ENCODE measurements at regions of chr17 and their contacts with region 1.

Region 1: DNA sequence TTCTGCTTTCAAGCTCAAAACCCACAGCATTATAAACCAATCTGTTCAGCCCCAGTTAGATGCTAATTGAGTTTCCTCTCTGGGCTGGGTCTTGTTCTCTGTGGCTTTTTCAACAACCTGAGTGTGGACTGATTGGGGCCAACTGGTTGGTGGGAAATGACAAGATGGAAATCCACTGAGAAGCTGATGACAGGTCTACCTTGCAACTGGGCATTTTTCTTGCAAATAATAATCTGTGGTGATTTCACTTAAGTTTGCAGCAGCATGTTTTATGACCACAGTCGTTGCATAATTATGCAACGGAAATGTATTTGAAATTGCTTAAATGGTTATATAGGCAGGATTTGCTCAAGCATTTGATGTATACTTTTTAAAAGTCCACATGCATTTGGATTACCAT is 69.9 kb downstream of the AKAP1 start:
- DNase-seq: no peak
- H3K4me3 ChIP-seq: no peak overlapping the region
- H3K27ac ChIP-seq: no peak overlapping the region
- H3K4me1 ChIP-seq: peaks cover 2% of the 10 kb centered on the region
- H3K27me3 ChIP-seq: no peaks in the 10 kb centered on the region
- CTCF ChIP-seq: no peak

Region 2: DNA sequence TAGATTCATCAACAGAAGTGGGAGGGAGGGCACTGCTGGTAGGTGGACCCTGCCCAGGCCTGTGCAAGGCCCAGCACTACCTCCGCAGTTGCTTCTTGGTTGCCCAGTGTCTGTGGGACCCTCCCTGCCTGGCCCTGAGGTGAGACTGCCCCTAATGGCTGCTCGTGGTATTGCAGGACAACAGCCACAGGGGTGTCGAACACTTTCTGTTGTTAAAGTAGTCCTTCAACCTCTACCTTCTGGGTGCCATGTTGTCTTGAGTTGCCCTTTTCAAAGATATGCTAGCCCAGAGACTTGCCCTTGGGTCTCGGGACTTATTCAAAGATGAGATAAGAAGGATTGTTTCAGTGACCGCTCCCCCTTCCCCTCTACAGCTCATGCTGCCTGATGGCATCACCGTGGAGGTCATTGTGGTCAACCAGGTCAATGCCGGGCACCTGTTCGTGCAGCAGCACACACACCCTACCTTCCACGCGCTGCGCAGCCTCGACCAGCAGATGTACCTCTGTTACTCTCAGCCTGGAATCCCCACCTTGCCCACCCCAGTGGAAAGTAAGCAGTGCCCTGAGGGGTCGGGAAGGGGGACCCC is 40.7 kb before region 1 on chr17:
- CTCF ChIA-PET with region 1: no interaction called
- dilution Hi-C with region 1: no loop called
- in situ Hi-C with region 1: no loop called
- intact Hi-C with region 1: no loop called
- DNase-seq: no peak
- H3K4me3 ChIP-seq: no peak overlapping the region
- H3K27ac ChIP-seq: no peak overlapping the region
- H3K4me1 ChIP-seq: peaks cover 15% of the 10 kb centered on the region
- H3K27me3 ChIP-seq: no peaks in the 10 kb centered on the region
- CTCF ChIP-seq: peak; percentile 76 to 90

Region 3: DNA sequence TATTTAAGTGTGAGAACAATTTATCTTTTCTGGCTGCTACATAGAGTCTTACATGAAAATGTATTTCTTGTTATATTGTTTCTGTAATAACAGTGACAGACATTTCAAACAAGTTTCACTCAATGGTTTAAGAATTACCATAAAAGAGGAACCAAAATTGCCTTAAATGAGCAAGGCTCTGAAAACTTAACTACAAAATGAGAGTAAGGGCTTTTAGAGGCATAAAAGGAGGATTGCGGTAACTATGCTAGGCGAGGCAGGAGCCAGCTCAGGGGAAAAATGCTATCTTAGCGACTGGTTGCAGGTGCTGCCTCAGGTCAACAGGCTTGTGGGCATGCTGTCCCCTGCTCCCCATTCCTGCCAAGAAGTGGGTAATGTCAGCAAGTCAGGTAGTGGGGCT is 19.7 kb after region 1 on chr17:
- CTCF ChIA-PET with region 1: no interaction called
- dilution Hi-C with region 1: no loop called
- in situ Hi-C with region 1: no loop called
- intact Hi-C with region 1: no loop called
- DNase-seq: no peak
- H3K4me3 ChIP-seq: no peak overlapping the region
- H3K27ac ChIP-seq: no peak overlapping the region
- H3K4me1 ChIP-seq: no peaks in the 10 kb centered on the region
- H3K27me3 ChIP-seq: no peaks in the 10 kb centered on the region
- CTCF ChIP-seq: no peak

Region 4: DNA sequence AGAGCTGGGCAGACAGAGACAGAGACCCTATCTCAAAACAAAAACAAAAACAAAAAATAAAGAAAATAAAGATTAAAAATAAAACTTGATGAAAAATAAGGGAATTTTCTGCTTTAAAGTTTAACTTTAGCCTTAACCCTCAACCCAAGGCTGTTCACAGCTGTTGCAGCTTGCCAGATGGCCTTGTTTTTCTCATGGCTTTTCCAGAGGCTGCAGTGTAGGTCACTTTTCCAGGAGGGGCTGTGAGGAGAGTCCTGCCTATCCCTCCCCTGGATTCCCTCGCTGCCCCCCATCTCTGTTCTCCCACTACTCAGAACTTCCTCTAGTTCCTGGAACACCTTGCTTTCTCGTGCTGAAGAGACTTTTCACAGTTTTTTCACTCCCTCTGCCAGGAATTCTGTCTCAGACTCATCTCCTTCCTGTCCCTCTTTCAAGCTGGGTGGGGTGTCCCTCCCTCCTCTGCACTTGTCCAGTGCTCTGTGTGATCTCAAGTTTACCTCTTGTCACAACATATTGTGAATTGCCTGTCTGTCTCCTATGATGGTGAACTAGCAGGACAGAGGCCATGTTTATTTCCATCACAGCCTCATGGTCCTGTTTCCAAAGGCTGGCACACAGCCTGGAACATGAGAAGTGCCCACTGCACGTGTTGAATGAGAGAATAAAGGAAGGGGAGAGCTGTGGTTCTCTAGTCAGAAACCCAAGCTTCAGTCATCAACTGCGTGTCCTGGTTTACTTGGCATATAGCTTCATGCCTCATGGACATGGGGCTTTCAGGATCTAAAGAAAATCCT is 31.5 kb after region 1 on chr17:
- CTCF ChIA-PET with region 1: no interaction called
- dilution Hi-C with region 1: no loop called
- in situ Hi-C with region 1: no loop called
- intact Hi-C with region 1: no loop called
- DNase-seq: no peak
- H3K4me3 ChIP-seq: no peak overlapping the region
- H3K27ac ChIP-seq: no peak overlapping the region
- H3K4me1 ChIP-seq: no peaks in the 10 kb centered on the region
- H3K27me3 ChIP-seq: no peaks in the 10 kb centered on the region
- CTCF ChIP-seq: no peak

Region 5: DNA sequence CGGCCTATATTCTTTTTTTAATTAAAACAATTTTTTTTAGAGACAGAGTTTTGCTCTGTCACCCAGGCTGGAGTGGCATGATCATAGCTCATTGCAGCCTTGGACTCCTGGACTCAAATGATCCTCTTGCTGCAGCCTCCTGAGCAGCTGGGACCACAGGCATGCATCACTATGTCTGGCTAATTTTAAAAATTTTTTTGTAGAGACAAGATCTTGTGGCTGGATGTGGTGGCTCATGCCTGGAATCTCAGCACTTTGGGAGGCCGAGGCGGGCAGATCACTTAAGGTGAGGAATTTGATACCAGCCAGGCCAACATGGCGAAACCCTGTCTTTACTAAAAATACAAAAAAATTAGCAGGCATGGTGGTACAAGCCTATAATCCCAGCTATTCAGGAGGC is 46.6 kb after region 1 on chr17:
- CTCF ChIA-PET with region 1: no interaction called
- dilution Hi-C with region 1: loop called (anchors 5 kb)
- in situ Hi-C with region 1: no loop called
- intact Hi-C with region 1: no loop called
- DNase-seq: no peak
- H3K4me3 ChIP-seq: no peak overlapping the region
- H3K27ac ChIP-seq: no peak overlapping the region
- H3K4me1 ChIP-seq: no peaks in the 10 kb centered on the region
- H3K27me3 ChIP-seq: no peaks in the 10 kb centered on the region
- CTCF ChIP-seq: no peak

Measured in mammary epithelial cell (primary cell).